ENCODE measurements at regions of chr9 and their contacts with region 1.

Region 1: GRCh38 chr9:114746601-114747346 is 59.1 kb downstream of the TNFSF15 start:
- DNase-seq: no peak
- H3K4me3 ChIP-seq: no peak overlapping the region
- H3K27ac ChIP-seq: no peak overlapping the region
- H3K4me1 ChIP-seq: peaks cover 15% of the 10 kb centered on the region
- H3K27me3 ChIP-seq: no peaks in the 10 kb centered on the region
- CTCF ChIP-seq: no peak

Region 2: DNA sequence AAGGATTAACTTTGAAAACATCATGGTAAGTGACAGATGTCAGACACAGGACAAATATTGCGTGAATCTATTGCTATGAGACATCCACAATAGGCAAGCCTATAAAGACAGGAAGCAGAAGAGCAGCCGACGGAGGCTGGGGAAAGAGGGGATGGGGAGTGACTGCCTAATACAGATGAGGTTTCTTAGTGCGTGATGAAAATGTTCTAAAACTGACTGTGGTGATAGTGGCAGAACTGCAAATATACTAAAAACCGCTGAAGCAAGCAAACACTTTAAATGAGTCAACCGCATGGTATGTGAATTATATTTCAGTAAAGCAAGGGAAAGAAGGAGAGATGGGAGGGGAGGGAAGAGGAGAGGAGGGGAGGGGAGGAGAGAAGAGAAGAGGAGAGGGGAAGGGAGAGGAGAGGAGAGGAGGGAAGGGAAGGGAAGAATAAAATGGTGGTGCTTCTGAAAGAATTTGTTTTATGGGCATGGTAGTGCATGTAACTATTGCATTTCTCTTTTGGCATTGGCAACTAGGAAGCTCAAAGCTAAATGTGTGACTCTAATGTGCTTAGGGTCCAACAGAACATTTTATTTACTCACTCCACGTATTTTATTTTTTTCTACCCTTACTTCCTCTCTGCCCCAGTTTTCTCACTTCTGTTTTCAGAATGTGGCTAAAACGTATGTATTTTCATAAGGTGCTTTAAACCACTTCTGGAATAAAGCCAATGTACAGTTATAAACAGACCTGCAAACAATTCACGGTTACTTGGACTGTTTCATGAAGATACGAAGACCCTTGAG is 380.2 kb before region 1 on chr9:
- CTCF ChIA-PET with region 1: interaction called, 11 read pairs
- POLR2A ChIA-PET with region 1: no interaction called
- intact Hi-C with region 1: no loop called
- DNase-seq: peak in 1 of 2 experiments; percentile 68
- H3K4me3 ChIP-seq: no peak overlapping the region
- H3K27ac ChIP-seq: peak overlapping the region; percentile 12; the same call in 1 of the 2 replicates
- H3K4me1 ChIP-seq: peaks cover 38% of the 10 kb centered on the region
- H3K27me3 ChIP-seq: no peaks in the 10 kb centered on the region
- CTCF ChIP-seq: no peak

Region 3: GRCh38 chr9:114805670-114806525 is 59.1 kb after region 1 on chr9 and contains the start of gene TNFSF15:
- CTCF ChIA-PET with region 1: no interaction called
- POLR2A ChIA-PET with region 1: no interaction called
- intact Hi-C with region 1: loop called (anchors 5 kb)
- DNase-seq: peak; percentile 82 to 88
- H3K4me3 ChIP-seq: peak within 1 kb of the TSS; percentile 42
- H3K27ac ChIP-seq: peak within 1 kb of the TSS; percentile 89
- H3K4me1 ChIP-seq: peaks cover 50% of the 10 kb centered on the region
- H3K27me3 ChIP-seq: no peaks in the 10 kb centered on the region
- CTCF ChIP-seq: no peak
- total RNA-seq, gene TNFSF15: 0.33 and 0.55 TPM in 2 replicates

Region 4: DNA sequence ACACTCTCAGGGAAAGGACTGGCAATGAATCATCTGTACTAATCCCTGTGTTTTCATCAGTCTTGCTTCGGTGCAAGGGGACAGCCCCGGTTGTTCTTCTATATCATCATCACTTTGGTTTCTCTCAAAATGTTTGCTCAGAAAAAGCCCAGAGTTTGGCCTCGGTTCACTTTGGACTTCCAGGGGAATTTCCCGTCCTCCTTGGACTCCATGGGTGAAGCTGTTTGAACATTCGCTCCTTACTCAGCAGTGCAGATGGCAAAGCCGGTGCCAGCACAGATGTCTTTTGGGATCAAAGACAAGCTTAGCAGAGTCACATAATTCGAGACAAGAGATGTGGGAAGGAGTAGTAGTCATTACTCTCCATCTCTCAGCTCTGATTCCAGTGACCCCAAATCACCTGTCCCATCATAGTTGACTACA is 253.5 kb after region 1 on chr9:
- CTCF ChIA-PET with region 1: no interaction called
- POLR2A ChIA-PET with region 1: no interaction called
- intact Hi-C with region 1: no loop called
- DNase-seq: no peak
- H3K4me3 ChIP-seq: no peak overlapping the region
- H3K27ac ChIP-seq: no peak overlapping the region
- H3K4me1 ChIP-seq: no peaks in the 10 kb centered on the region
- H3K27me3 ChIP-seq: 0 out of 2 replicates have a peak, but pooled peaks cover 9% of the 10 kb centered on the region
- CTCF ChIP-seq: no peak

Measured in PC-9 (cell line).